Colonic mucosa (tissue), 4 donors: ENCODE measurements at regions of chr12 and their contacts with region 1.

Region 1: GRCh38 chr12:70733385-70733784 is 96.2 kb upstream of the PTPRB start:
- DNase-seq: peak; percentile 41
- H3K4me3 ChIP-seq: no peak overlapping the region
- H3K27ac ChIP-seq: no peak overlapping the region
- H3K4me1 ChIP-seq: no peaks in the 10 kb centered on the region
- H3K27me3 ChIP-seq: no peaks in the 10 kb centered on the region
- CTCF ChIP-seq: peak; percentile 73

Region 2: DNA sequence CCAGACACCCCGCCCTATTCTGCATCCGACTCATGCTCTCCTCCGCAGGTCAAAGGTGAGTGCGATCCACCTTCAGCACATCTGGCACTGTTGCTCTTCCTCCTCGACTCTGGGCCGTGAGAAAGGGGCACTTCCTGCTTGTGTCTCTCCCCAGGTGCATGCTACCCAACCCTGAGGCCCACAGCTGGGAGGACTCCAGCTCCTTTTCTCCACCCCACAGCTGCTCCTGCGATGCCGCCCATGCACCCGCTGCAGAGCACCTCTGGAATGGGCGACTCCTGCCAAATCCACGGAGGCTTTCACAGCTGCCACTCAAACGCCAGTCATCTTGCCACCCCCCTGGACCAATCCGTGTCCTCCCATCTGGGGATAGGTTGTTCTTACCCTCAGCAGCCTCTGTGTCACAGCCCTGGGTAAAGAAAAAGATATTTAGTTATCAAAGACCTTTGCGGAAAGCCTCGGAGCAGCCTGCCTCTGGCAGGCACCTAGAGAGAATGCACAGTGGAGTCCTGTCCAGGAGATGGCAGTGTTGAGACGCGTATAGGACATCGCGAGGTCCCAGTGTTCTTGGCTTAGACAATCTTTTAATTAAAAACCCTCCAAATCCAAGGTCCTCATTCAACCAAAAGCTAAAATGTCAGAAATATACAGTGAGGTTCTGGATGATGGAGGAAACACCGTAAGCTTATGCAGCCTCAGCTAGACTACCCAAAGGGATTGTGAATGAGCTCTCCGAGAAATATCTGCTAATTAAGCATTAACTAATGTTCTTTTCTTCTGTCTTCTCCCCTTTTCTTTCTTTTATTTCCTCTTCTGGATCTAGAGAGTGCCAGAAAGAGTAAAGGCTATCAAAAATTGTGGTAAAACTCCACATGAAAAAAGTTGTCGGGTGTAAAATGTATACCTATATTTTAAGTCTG is 854.1 kb before region 1 on chr12:
- intact Hi-C with region 1: loop called (anchors 5 kb)
- DNase-seq: peak; percentile 82
- H3K4me3 ChIP-seq: peak overlapping the region; percentile 14
- H3K27ac ChIP-seq: no peak overlapping the region
- H3K4me1 ChIP-seq: no peaks in the 10 kb centered on the region
- H3K27me3 ChIP-seq: no peaks in the 10 kb centered on the region
- CTCF ChIP-seq: peak; percentile 85

Region 3: GRCh38 chr12:70849265-70849960 is 116.0 kb after region 1 on chr12:
- intact Hi-C with region 1: loop called (anchors 1 kb)
- DNase-seq: no peak
- H3K4me3 ChIP-seq: no peak overlapping the region
- H3K27ac ChIP-seq: no peak overlapping the region
- H3K4me1 ChIP-seq: no peaks in the 10 kb centered on the region
- H3K27me3 ChIP-seq: no peaks in the 10 kb centered on the region
- CTCF ChIP-seq: peak; percentile 28

Region 4: DNA sequence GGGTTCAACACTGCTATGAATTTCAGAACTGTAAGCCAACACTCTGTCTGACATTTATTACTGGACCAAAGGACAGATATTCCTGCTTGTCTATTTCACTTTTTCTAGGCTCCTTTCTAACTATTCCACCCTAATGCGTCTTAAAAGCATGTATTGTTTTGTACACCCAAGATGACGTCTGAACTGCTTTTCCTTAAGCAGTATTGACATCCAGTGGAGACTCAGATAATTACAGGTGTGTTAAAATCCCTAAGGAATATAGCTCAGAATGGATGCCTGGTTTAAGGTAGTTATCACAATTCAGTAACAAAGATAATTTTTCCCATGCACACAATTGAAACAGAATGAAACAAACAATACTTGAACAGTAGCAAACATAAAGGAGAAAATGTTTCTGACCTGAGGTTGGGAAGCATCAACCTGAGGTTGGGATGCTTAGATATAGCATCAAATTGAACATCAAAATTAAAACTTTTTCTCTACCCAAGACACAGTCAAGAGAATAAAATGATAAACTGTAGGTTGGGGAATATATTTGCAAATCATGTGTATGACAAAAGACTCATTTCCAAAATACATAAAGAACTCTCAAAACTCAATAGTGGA is 280.9 kb after region 1 on chr12:
- intact Hi-C with region 1: loop called (anchors 5 kb)
- DNase-seq: no peak
- H3K4me3 ChIP-seq: no peak overlapping the region
- H3K27ac ChIP-seq: no peak overlapping the region
- H3K4me1 ChIP-seq: no peaks in the 10 kb centered on the region
- H3K27me3 ChIP-seq: no peaks in the 10 kb centered on the region
- CTCF ChIP-seq: peak; percentile 53